HepG2 (cell line): ENCODE measurements at regions of chr1 and their contacts with region 1.

Region 1: DNA sequence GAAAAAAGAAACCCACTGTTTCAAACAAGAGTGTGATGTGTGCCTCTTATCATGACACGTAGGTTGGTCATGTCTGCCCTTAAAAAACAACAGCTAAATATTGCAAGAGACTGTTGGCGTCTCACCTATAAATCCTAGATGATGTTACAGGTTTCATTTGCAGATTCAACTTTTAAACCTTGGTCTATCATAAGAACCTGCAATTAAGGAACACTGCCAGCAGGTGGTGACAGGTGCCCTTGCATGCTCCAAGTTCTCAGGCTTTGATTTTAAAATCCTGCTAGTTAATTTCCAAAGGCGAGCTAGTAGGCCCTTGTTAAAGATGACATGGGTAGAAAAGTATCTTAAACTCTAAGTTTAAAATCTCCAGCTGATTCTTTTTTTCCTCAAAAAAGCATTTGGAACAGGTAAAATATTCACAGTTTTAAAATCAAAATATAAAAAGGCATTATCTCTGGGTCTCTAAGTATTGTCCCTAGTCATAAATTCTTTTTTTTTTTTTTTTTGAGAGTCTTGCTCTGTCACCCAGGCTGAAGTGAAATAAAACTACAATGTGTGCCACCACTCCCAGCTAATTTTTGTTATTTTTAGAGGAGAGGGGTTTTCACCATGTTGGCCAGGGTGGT is 39.1 kb downstream of the CLSTN1 start:
- DNase-seq: peak; percentile 63
- ATAC-seq: peak; percentile 42; the same call in 2 of the 3 replicates
- H3K4me3 ChIP-seq: no peak overlapping the region
- H3K27ac ChIP-seq: peak overlapping the region; percentile 6
- H3K4me1 ChIP-seq: no peaks in the 10 kb centered on the region
- H3K27me3 ChIP-seq: no peaks in the 10 kb centered on the region
- CTCF ChIP-seq: peak; percentile 77
- EP300 ChIP-seq: no peak
- POLR2A ChIP-seq: no peak
- RAD21 ChIP-seq: peak; percentile 74

Region 2: DNA sequence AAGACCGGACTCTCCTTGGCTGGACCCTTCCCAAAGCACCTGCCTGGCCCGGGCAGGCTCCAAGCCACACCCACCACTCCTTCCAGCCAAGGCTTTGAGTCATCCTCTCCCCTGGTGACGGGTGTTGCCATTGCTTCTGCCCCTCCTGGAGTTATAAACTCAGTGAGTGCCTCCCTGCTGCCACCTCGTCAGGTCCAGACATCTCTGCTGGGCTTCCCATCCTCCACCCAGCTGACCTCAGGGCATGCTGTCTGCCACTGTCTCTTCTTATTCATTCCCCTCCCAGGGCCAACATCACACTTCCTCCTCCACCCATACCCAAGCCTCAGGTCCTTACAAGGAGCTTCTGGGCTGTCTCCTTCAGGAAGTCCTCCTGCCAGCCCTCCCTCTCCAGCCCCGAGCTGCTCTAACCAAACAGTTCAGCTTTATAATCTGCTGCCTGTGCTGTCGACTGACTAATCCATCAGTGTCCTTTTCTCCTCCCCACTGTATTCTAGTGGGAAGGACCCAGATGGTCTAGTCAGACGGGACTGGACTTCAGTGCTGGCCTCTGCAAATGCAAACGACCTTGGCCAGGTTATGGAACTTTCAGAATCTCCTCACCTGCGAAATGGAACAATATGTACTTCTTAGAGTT is 41.0 kb after region 1 on chr1:
- CTCF ChIA-PET with region 1: no interaction called
- POLR2A ChIA-PET with region 1: no interaction called
- in situ Hi-C with region 1: no loop called
- intact Hi-C with region 1: loop called (anchors 5 kb)
- DNase-seq: peak; percentile 46
- ATAC-seq: peak; percentile 66
- H3K4me3 ChIP-seq: peak overlapping the region; percentile 9 to 78 (median 68); a peak in 4 of 6 replicates
- H3K27ac ChIP-seq: no peak overlapping the region
- H3K4me1 ChIP-seq: peaks cover 56% of the 10 kb centered on the region
- H3K27me3 ChIP-seq: peaks cover 0 to 4% of the 10 kb centered on the region in 2 experiments; a peak in 1 of 5 replicates
- CTCF ChIP-seq: no peak
- EP300 ChIP-seq: no peak
- POLR2A ChIP-seq: no peak
- RAD21 ChIP-seq: no peak

Region 3: DNA sequence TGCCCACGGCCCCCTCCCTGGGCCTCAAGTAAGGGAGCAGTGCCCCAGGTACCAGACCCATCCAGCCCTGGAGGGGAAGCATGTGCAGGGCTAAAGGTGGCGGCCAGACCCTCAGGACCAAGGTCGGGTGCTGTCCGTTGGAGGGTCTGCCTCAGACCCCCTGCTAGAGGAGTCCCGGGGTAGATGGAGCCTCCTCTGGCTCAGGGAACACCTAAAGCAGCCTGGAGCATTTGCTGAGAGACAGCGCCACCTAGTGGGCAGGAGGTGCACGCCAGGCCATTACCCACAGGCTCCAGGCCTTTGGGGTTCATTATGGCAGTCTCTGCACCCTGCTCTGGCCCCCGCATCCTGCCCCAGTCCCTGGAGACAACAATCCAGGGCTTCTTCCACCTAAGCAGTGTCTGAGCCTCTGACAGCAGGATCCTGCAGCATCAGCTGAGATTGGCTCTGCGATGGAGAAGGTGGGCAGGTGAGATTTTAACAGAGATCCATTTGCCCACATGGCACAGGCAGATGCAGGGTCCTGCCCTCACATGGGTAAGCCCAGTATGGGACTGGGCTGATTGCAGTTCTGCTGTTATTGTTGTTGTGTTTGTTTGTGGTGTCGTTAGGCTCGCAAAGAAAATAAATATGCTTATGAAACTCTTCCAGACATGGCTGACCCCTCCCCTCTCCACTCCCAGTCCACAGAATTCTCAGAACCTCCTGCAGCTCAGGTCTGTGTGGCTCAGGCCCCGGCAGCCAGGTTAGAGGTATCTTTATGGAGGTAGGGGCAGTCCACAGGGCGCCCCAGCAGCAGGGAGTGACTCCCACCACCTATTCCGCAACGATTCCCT is 83.0 kb after region 1 on chr1:
- CTCF ChIA-PET with region 1: interaction called, 41 read pairs
- POLR2A ChIA-PET with region 1: no interaction called
- in situ Hi-C with region 1: loop called (anchors 5 kb)
- intact Hi-C with region 1: loop called (anchors 1 kb)
- DNase-seq: peak; percentile 46
- ATAC-seq: peak; percentile 85
- H3K4me3 ChIP-seq: no peak overlapping the region
- H3K27ac ChIP-seq: no peak overlapping the region
- H3K4me1 ChIP-seq: peaks cover 28% of the 10 kb centered on the region
- H3K27me3 ChIP-seq: no peaks in the 10 kb centered on the region
- CTCF ChIP-seq: peak; percentile 98
- EP300 ChIP-seq: no peak
- POLR2A ChIP-seq: no peak
- RAD21 ChIP-seq: peak; percentile 94